Activated T-helper 1 cell treated with anti-CD3 and anti-CD28 coated beads, Interleukin-12 subunit alpha, Interleukin-12 subunit beta, Interleukin-2, Interleukin-4 antibody, amounts not matched to agents 30 ng/mL and 10 ng/mL and 1 ng/mL, durations not matched to agents 14 hours and 24 hours and 36 hours (primary cell): ENCODE measurements at regions of chr13 and their contacts with region 1.

Region 1: GRCh38 chr13:46598140-46598819 is 45.3 kb downstream of the LRCH1 start:
- DNase-seq: no peak
- H3K4me3 Mint-ChIP-seq: no peak overlapping the region
- H3K27ac Mint-ChIP-seq: no peak overlapping the region
- H3K4me1 Mint-ChIP-seq: peaks cover 86% of the 10 kb centered on the region
- H3K27me3 Mint-ChIP-seq: no peaks in the 10 kb centered on the region

Region 2: GRCh38 chr13:46341112-46341711 is 257.1 kb before region 1 on chr13:
- intact Hi-C with region 1: loop called (anchors 2 kb)
- DNase-seq: no peak
- H3K4me3 Mint-ChIP-seq: peak overlapping the region; percentile 60
- H3K27ac Mint-ChIP-seq: peak overlapping the region; percentile 97
- H3K4me1 Mint-ChIP-seq: peaks cover 48% of the 10 kb centered on the region
- H3K27me3 Mint-ChIP-seq: no peaks in the 10 kb centered on the region

Region 3: DNA sequence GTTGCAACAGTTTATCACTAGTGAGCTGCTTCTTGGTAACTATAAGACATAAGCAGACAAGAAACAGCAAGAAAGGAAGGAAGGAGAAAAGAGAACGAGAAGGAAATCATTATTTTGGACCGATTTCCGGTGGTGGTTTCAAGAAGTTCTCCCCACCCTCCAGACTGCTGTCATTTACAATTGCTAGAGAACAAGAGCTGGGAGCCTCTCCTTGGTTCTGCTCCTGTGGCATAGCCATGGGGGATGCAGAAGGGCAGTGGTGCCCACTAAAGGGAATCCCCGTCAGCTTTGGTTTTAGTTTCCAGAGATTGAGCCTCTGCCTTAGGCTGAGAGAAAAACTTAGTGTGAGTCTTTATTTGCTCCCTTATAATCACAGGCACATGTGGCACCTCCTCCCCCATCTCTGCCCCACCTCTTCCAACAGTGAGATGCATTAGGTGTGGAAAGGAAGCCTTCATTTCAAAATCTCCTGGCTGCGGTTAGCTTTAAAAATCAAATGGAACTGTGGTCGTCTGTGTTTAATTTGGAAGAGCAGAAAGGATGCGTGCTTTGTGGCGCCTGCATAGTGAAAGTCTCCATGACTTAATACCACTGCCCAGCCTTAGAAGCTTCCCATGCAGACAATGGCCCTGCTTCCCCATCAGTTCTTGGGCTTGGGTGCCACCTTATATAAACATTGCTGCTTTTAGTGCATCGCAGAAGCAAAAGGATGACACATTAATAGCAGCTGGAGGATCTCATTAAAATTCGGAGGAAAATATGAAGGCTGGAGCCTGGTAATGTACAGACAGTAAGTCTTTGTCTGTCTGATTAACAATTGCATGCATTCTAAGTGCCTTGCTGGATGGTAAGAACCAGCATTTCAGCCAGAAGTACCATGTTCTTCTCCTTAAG is 20.3 kb before region 1 on chr13:
- intact Hi-C with region 1: loop called (anchors 1 kb)
- DNase-seq: no peak
- H3K4me3 Mint-ChIP-seq: peak overlapping the region; percentile 6
- H3K27ac Mint-ChIP-seq: peak overlapping the region; percentile 68
- H3K4me1 Mint-ChIP-seq: peaks cover 55% of the 10 kb centered on the region
- H3K27me3 Mint-ChIP-seq: peaks cover 2% of the 10 kb centered on the region

Region 4: DNA sequence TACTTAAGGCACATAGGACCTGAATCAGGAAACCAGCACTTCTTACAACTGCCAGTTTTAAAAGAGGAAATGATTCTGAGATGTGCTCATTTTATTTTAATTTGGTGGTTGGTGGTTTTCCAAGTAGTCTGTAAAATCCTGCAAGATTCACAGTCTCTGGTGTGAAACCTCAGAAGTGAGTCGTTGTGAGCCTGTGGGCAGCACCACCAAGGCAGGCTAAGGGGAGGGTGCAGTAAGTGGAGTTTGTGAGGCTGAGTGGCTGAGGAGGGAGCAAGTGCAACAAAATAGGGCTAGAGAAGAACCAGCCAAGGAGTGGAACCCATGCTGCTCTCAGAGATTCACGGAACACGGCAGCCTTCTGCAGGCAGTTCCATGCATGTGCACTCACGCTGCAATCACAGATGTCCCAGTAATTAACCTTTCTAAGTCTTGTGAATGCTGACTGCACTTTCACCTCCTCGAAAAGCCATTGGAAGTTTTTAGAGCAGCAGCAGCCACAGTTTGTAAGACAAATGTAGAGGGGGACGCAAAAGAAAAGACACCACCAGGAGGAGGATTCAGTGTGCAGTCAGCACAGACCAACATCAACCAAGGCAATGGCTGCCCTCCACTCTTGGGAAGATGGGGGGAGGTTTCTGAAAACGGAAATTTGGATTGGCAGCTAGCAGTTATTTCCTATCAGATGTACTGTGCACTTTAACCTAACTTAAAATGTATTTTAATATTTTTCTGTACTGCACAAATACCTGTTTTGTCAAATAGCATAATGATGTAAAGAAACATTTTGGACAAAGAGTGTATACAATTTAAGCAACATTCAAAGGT is 153.7 kb after region 1 on chr13:
- intact Hi-C with region 1: loop called (anchors 1 kb)
- DNase-seq: peak; percentile 66
- H3K4me3 Mint-ChIP-seq: peak overlapping the region; percentile 5
- H3K27ac Mint-ChIP-seq: peak overlapping the region; percentile 69
- H3K4me1 Mint-ChIP-seq: peaks cover 47% of the 10 kb centered on the region
- H3K27me3 Mint-ChIP-seq: no peaks in the 10 kb centered on the region

Region 5: DNA sequence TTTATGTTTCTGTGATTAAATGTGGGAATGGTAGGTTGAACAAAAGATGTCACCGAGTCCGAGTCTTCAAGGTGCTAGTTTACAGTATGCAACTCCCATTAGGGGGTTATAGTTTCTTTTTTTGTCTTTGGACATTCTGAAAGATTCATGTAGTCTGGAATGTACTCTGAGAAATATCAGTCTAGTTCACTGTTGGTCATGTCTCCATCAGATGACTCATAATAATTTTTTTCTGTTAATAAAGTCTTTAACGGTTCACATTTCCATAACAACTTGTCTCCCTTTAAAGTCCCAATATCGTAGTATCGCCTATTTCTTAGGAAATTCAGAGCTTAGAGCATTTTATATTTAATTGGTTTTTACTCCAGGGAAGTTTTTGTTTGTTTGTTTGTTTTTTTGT is 212.2 kb after region 1 on chr13:
- intact Hi-C with region 1: no loop called
- DNase-seq: no peak
- H3K4me3 Mint-ChIP-seq: no peak overlapping the region
- H3K27ac Mint-ChIP-seq: no peak overlapping the region
- H3K4me1 Mint-ChIP-seq: no peaks in the 10 kb centered on the region
- H3K27me3 Mint-ChIP-seq: peaks cover 15% of the 10 kb centered on the region